ENCODE measurements at regions of chr10 and their contacts with region 1.

Region 1: GRCh38 chr10:35336084-35336831 is at the start of gene CCNY:
- DNase-seq: peak; percentile 56
- ATAC-seq: peak; percentile 87
- H3K4me3 ChIP-seq: peak within 1 kb of the TSS; percentile 100
- H3K27ac ChIP-seq: peak within 1 kb of the TSS; percentile 98
- H3K4me1 ChIP-seq: peaks cover 18% of the 10 kb centered on the region
- H3K27me3 ChIP-seq: no peaks in the 10 kb centered on the region
- CTCF ChIP-seq: no peak
- POLR2A ChIP-seq: peak; percentile 77
- RAD21 ChIP-seq: peak; percentile 1; the same call in 1 of the 2 replicates
- total RNA-seq, gene CCNY: 81.4 and 131 TPM in 2 replicates

Region 2: DNA sequence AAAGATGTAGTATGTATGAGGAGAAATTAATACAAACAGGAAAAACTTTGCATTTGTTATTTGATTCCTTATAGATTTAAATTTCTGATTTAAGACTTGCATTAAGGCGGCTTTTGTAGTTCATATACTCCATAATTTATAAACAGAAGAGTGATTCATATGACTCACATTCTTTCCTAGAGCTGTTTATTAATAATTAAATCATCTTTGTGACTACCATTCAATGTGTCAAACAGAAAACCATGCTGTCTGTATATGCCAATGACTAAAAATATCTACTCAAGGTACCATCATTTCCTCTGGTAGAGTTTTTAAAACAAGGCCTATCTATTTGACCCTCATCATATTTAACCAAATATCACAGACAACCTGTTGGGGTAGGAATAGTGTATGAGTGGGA is 1022.9 kb before region 1 on chr10:
- CTCF ChIA-PET with region 1: no interaction called
- POLR2A ChIA-PET with region 1: no interaction called
- dilution Hi-C with region 1: no loop called
- in situ Hi-C with region 1: no loop called
- intact Hi-C with region 1: no loop called
- DNase-seq: peak; percentile 25
- ATAC-seq: peak; percentile 37; the same call in 1 of the 2 replicates
- H3K4me3 ChIP-seq: no peak overlapping the region
- H3K27ac ChIP-seq: no peak overlapping the region
- H3K4me1 ChIP-seq: peaks cover 6% of the 10 kb centered on the region
- H3K27me3 ChIP-seq: no peaks in the 10 kb centered on the region
- CTCF ChIP-seq: no peak
- POLR2A ChIP-seq: no peak
- RAD21 ChIP-seq: no peak

Region 3: DNA sequence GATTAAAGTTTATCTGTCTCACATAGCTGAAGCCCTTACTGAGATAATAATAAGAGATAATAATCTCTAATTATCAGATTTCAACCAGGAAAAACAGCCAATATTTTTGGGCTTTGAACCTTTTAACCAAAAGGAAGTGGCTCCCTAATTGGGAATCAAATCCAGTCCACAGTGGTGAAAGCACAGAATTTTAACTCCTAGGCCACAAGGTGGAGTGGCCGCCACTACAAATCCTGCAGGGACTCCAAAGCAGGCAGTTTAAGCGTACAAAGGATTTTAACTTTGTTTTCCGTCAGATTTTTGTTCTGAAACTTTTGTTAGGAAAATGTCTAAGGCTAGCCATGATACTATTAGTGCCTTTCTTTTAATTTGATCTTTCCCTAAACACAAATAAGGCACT is 99.5 kb before region 1 on chr10:
- CTCF ChIA-PET with region 1: interaction called, 5 read pairs
- POLR2A ChIA-PET with region 1: no interaction called
- dilution Hi-C with region 1: no loop called
- in situ Hi-C with region 1: no loop called
- intact Hi-C with region 1: loop called (anchors 1 kb)
- DNase-seq: peak; percentile 37
- ATAC-seq: peak; percentile 79
- H3K4me3 ChIP-seq: no peak overlapping the region
- H3K27ac ChIP-seq: no peak overlapping the region
- H3K4me1 ChIP-seq: no peaks in the 10 kb centered on the region
- H3K27me3 ChIP-seq: no peaks in the 10 kb centered on the region
- CTCF ChIP-seq: peak; percentile 48
- POLR2A ChIP-seq: no peak
- RAD21 ChIP-seq: peak; percentile 62

Region 4: DNA sequence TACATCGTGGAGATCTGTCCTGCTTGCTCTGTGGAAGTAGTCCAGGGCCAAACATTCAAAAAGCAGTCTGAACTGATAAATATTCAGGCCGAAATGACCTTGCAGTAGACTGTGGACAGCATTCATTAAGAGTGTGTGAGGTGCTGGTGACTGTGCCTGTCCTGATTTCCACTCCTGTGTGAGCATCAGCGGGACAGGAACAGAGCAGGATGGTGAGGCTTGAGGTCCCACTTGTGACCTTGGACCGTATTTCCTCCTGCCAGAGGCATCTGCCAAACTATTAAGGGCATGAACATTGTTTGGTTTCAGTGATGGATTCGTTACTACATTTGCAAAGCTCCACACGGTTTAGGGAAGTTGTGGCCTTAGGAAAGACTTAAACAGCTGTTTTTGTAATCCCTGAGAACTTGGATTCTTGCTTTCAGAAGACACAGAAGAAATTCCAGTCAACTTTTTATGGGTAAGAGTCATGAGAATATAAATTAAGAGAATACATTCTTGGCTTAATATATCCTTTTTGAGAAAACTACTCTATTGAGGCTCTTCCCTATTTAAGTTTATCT is 32.9 kb after region 1 on chr10:
- CTCF ChIA-PET with region 1: no interaction called
- POLR2A ChIA-PET with region 1: no interaction called
- dilution Hi-C with region 1: no loop called
- in situ Hi-C with region 1: no loop called
- intact Hi-C with region 1: no loop called
- DNase-seq: peak; percentile 36
- ATAC-seq: peak; percentile 74
- H3K4me3 ChIP-seq: no peak overlapping the region
- H3K27ac ChIP-seq: peak overlapping the region; percentile 30; the same call in 1 of the 2 replicates
- H3K4me1 ChIP-seq: peaks cover 10% of the 10 kb centered on the region
- H3K27me3 ChIP-seq: no peaks in the 10 kb centered on the region
- CTCF ChIP-seq: no peak
- POLR2A ChIP-seq: no peak
- RAD21 ChIP-seq: no peak

Region 5: DNA sequence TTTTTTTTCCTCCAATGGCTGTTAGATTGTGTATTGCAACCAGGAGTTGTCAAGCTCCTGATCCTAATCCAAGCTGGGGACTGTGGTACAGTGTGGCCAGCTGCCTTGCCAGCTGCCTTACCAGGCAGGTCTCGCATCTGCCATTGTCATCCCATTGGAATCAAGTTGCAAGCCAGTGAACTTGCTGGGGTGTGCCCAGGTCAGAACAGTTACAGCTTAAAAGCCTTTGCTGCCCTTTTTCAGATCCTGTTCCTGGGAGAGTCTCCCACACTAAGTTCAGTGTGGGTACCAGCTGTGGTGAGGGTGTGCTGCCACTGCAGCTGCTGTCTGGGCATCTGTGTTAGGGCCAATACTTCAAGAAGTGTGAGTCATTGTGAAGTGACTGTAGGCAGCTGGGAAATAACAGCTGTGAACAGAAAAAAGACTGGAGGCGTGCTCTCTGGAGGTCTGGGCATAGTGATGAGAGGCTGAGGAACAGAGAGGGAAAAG is 72.9 kb after region 1 on chr10:
- CTCF ChIA-PET with region 1: no interaction called
- POLR2A ChIA-PET with region 1: no interaction called
- dilution Hi-C with region 1: no loop called
- in situ Hi-C with region 1: no loop called
- intact Hi-C with region 1: loop called (anchors 5 kb)
- DNase-seq: peak; percentile 90
- ATAC-seq: peak; percentile 87
- H3K4me3 ChIP-seq: no peak overlapping the region
- H3K27ac ChIP-seq: peak overlapping the region; percentile 54
- H3K4me1 ChIP-seq: peaks cover 24% of the 10 kb centered on the region
- H3K27me3 ChIP-seq: no peaks in the 10 kb centered on the region
- CTCF ChIP-seq: no peak
- POLR2A ChIP-seq: no peak
- RAD21 ChIP-seq: 0 out of 2 replicates have a peak, but pooled peaks have one; percentile 9

Region 6: GRCh38 chr10:35462491-35462934 is 126.3 kb after region 1 on chr10:
- CTCF ChIA-PET with region 1: no interaction called
- POLR2A ChIA-PET with region 1: no interaction called
- dilution Hi-C with region 1: no loop called
- in situ Hi-C with region 1: no loop called
- intact Hi-C with region 1: loop called (anchors 5 kb)
- DNase-seq: no peak
- ATAC-seq: no peak
- H3K4me3 ChIP-seq: no peak overlapping the region
- H3K27ac ChIP-seq: no peak overlapping the region
- H3K4me1 ChIP-seq: peaks cover 38% of the 10 kb centered on the region
- H3K27me3 ChIP-seq: no peaks in the 10 kb centered on the region
- CTCF ChIP-seq: no peak
- POLR2A ChIP-seq: no peak
- RAD21 ChIP-seq: no peak

Region 7: DNA sequence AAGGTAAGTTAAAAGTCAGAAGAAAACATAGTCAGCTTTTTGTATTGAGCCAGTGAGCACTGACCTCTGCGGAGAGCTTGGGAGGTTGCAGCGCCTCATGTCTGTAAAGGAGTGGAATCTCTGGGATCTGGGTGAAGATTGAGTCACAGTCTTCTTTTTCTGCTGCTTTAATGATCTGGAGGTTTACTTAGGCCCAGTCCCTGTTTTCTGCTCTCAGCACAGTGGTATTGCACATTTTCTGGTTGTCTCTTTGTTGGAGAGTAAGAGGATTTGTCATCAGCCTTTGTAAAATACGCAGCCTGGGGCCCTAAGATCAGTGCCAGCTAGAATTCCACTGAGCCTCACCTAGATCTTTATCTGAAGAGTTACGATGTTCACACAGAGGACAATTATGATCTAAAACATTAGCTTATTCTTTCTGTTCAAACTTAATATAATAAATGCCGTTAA is 210.6 kb after region 1 on chr10:
- CTCF ChIA-PET with region 1: no interaction called
- POLR2A ChIA-PET with region 1: no interaction called
- dilution Hi-C with region 1: no loop called
- in situ Hi-C with region 1: no loop called
- intact Hi-C with region 1: loop called (anchors 5 kb)
- DNase-seq: peak; percentile 61
- ATAC-seq: peak; percentile 67
- H3K4me3 ChIP-seq: no peak overlapping the region
- H3K27ac ChIP-seq: no peak overlapping the region
- H3K4me1 ChIP-seq: peaks cover 7% of the 10 kb centered on the region
- H3K27me3 ChIP-seq: no peaks in the 10 kb centered on the region
- CTCF ChIP-seq: 0 out of 2 replicates have a peak, but pooled peaks have one; percentile 6
- POLR2A ChIP-seq: no peak
- RAD21 ChIP-seq: peak; percentile 10; the same call in 1 of the 2 replicates

Region 8: DNA sequence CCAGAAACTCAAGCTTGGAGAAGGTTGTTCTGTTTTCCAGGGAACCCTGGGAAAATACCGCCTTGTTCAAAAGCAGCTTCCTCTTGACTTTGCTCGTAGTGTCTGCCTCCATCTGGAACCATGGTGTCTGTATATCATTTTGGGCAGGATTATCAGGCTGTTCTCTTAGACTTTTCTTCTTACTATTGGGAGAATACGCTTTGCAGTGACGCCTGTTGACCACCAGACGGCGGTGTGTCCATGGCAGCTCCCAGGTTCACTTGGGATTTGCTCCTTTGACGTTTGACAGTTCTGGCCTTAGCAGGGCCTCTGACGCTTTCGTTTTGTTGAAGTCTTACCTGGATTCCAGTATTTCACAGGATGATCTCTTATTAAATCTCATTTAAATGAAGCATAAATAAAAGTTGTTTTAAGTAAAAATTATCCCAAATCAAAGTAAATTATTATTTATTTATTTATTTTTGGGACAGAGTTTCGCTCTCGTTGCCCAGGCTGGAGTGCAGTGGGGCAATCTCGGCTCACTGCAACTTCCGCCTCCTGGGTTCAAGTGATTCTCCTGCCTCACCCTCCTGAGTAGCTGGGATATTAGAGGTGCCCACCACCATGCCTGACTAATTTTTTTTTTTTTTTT is 227.1 kb after region 1 on chr10:
- CTCF ChIA-PET with region 1: no interaction called
- POLR2A ChIA-PET with region 1: no interaction called
- dilution Hi-C with region 1: no loop called
- in situ Hi-C with region 1: no loop called
- intact Hi-C with region 1: loop called (anchors 2 kb)
- DNase-seq: peak; percentile 76
- ATAC-seq: peak; percentile 64
- H3K4me3 ChIP-seq: no peak overlapping the region
- H3K27ac ChIP-seq: no peak overlapping the region
- H3K4me1 ChIP-seq: peaks cover 6% of the 10 kb centered on the region
- H3K27me3 ChIP-seq: no peaks in the 10 kb centered on the region
- CTCF ChIP-seq: peak; percentile 92
- POLR2A ChIP-seq: no peak
- RAD21 ChIP-seq: peak; percentile 83

Region 9: DNA sequence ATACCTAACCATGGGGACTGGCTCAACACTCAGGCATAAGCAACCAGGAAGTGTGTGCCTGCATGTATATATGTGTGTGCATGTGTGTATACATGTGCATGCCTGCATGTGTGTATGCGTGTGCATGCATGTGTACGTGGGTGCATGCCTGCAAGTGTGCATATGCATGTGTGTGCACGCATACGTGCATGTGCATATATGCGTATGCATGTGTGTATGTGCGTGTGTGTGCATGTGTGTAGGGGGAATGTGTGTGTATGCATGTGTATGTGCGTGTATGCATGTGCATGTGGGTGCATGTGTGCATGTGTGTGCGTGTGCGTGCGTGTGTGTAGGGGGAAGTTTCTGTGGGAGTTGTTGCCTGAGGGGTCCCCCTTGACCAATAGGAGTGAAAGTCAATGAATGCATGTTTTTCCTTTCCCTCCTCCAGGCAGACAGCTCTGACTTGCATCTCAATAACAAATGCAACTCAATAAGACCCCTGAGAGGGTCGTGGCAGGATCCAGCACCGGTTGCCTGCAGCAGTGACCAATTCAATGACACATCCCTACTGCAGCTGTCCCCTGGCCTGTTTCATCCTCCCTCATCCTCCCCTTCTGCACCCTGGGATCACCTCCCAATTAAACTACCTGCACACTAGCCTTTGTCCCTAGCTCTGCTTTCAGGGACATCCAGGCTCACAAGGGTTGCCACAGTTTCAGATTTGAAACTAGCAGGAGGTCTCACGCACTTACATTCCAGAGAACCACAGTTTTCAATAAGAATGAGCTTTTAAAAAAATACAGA is 332.8 kb after region 1 on chr10:
- CTCF ChIA-PET with region 1: no interaction called
- POLR2A ChIA-PET with region 1: no interaction called
- dilution Hi-C with region 1: no loop called
- in situ Hi-C with region 1: no loop called
- intact Hi-C with region 1: no loop called
- DNase-seq: no peak
- ATAC-seq: no peak
- H3K4me3 ChIP-seq: no peak overlapping the region
- H3K27ac ChIP-seq: no peak overlapping the region
- H3K4me1 ChIP-seq: no peaks in the 10 kb centered on the region
- H3K27me3 ChIP-seq: peaks cover 3% of the 10 kb centered on the region; the same call in 1 of the 2 replicates
- CTCF ChIP-seq: no peak
- POLR2A ChIP-seq: no peak
- RAD21 ChIP-seq: no peak

Measured in IMR-90 (cell line).